ENCODE measurements at regions of chr18 and their contacts with region 1.

Region 1: GRCh38 chr18:12934454-12935071 is 13.2 kb upstream of the SEH1L start:
- DNase-seq: peak; percentile 84
- H3K4me3 ChIP-seq: no peak overlapping the region
- H3K27ac ChIP-seq: no peak overlapping the region
- H3K4me1 ChIP-seq: peaks cover 0 to 6% (median 1%) of the 10 kb centered on the region in 4 donors
- H3K27me3 ChIP-seq: no peaks in the 10 kb centered on the region
- CTCF ChIP-seq: peak; percentile 77 to 93 (median 82)
- EP300 ChIP-seq: no peak
- POLR2A ChIP-seq: no peak

Region 2: GRCh38 chr18:12726774-12727550 is 207.6 kb before region 1 on chr18:
- in situ Hi-C with region 1: loop called in 3 of 4 experiments (anchors 5 to 10 kb)
- intact Hi-C with region 1: loop called (anchors 2 kb)
- DNase-seq: peak; percentile 34
- H3K4me3 ChIP-seq: no peak overlapping the region
- H3K27ac ChIP-seq: no peak overlapping the region
- H3K4me1 ChIP-seq: no peaks in the 10 kb centered on the region
- H3K27me3 ChIP-seq: no peaks in the 10 kb centered on the region
- CTCF ChIP-seq: peak; percentile 88 to 92 (median 90)
- EP300 ChIP-seq: no peak
- POLR2A ChIP-seq: no peak

Region 3: GRCh38 chr18:12737243-12737902 is 197.2 kb before region 1 on chr18:
- in situ Hi-C with region 1: loop called in 3 of 4 experiments (anchors 5 to 10 kb)
- intact Hi-C with region 1: no loop called
- DNase-seq: no peak
- H3K4me3 ChIP-seq: no peak overlapping the region
- H3K27ac ChIP-seq: no peak overlapping the region
- H3K4me1 ChIP-seq: no peaks in the 10 kb centered on the region
- H3K27me3 ChIP-seq: no peaks in the 10 kb centered on the region
- CTCF ChIP-seq: no peak
- EP300 ChIP-seq: no peak
- POLR2A ChIP-seq: no peak

Region 4: GRCh38 chr18:12744103-12744502 is 190.5 kb before region 1 on chr18:
- in situ Hi-C with region 1: loop called in 2 of 4 experiments (anchors 10 kb)
- intact Hi-C with region 1: no loop called
- DNase-seq: no peak
- H3K4me3 ChIP-seq: no peak overlapping the region
- H3K27ac ChIP-seq: no peak overlapping the region
- H3K4me1 ChIP-seq: no peaks in the 10 kb centered on the region
- H3K27me3 ChIP-seq: no peaks in the 10 kb centered on the region
- CTCF ChIP-seq: peak; percentile 47 to 54 (median 48)
- EP300 ChIP-seq: no peak
- POLR2A ChIP-seq: no peak

Measured in transverse colon (tissue), 4 donors.